GM18951 (cell line): ENCODE measurements at regions of chr11 and their contacts with region 1.

Region 1: GRCh38 chr11:20110908-20111669 is 49.2 kb downstream of the DBX1 start:
- POLR2A ChIP-seq: no peak

Region 2: DNA sequence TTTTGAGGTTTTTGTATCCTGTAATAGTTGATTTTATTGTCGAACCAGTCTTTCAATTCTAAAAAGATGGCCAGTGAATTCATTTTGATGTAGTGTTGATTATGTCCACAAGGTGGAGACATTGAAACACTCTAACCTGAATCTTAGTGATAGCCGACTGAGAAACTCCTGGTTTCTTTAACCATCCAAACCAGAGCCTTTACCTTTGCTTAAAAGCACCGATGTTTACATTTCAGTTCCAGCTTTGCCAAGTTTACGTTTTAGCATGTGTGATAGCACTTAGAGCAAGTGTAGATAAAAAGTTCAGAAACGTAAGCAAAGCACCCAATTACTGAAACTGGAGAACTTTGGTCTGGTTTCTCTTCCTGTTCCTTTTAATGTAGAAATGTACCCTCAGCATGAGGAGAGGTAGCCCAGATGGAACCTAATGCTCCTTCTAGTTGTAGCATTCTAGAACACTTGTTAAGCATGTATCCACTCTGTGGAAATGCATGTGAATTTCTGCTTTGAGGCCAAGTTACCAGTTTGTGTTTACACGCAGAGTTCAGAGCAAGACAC is 159.5 kb before region 1 on chr11:
- in situ Hi-C with region 1: loop called (anchors 25 kb)
- POLR2A ChIP-seq: no peak